ENCODE measurements at regions of chrX and their contacts with region 1.

Region 1: GRCh38 chrX:56248492-56248891 is 16.3 kb downstream of the KLF8 start:
- DNase-seq: peak; percentile 71
- H3K4me3 Mint-ChIP-seq: no peak overlapping the region
- H3K27ac Mint-ChIP-seq: no peak overlapping the region
- H3K4me1 Mint-ChIP-seq: peaks cover 6% of the 10 kb centered on the region
- H3K27me3 Mint-ChIP-seq: peaks cover 36% of the 10 kb centered on the region
- CTCF ChIP-seq: peak; percentile 67

Region 2: GRCh38 chrX:54891573-54891972 is 1356.9 kb before region 1 on chrX:
- CTCF ChIA-PET with region 1: no interaction called
- POLR2A ChIA-PET with region 1: no interaction called
- intact Hi-C with region 1: loop called (anchors 5 kb)
- DNase-seq: peak; percentile 56
- H3K4me3 Mint-ChIP-seq: no peak overlapping the region
- H3K27ac Mint-ChIP-seq: no peak overlapping the region
- H3K4me1 Mint-ChIP-seq: no peaks in the 10 kb centered on the region
- H3K27me3 Mint-ChIP-seq: peaks cover 51% of the 10 kb centered on the region
- CTCF ChIP-seq: no peak

Region 3: DNA sequence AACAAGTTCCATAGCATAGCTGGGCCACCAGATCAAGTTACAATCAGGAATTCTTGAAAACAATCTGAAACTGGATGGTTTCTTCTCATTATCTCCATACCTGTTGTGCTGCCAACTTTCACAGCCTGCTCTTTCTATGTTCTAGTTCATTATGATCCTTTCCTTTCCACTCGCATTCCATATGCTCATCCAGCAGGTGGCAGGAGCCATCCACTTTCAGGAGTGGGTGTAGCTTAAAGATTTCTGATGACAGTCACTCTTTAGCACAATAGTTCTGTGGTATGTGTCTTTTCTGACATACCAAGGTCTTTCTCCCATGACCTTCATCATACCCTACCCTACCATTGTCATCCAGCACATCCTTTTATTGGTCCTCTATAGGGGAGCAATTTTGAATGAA is 1113.3 kb before region 1 on chrX:
- CTCF ChIA-PET with region 1: interaction called, 7 read pairs
- POLR2A ChIA-PET with region 1: no interaction called
- intact Hi-C with region 1: loop called (anchors 1 kb)
- DNase-seq: peak; percentile 47
- H3K4me3 Mint-ChIP-seq: no peak overlapping the region
- H3K27ac Mint-ChIP-seq: no peak overlapping the region
- H3K4me1 Mint-ChIP-seq: no peaks in the 10 kb centered on the region
- H3K27me3 Mint-ChIP-seq: peaks cover 53% of the 10 kb centered on the region
- CTCF ChIP-seq: peak; percentile 45

Region 4: GRCh38 chrX:56219700-56220099 is 28.8 kb before region 1 on chrX:
- CTCF ChIA-PET with region 1: interaction called, 92 read pairs
- POLR2A ChIA-PET with region 1: no interaction called
- intact Hi-C with region 1: loop called (anchors 1 kb)
- DNase-seq: peak; percentile 36
- H3K4me3 Mint-ChIP-seq: no peak overlapping the region
- H3K27ac Mint-ChIP-seq: no peak overlapping the region
- H3K4me1 Mint-ChIP-seq: no peaks in the 10 kb centered on the region
- H3K27me3 Mint-ChIP-seq: peaks cover 22% of the 10 kb centered on the region
- CTCF ChIP-seq: peak; percentile 24

Region 5: DNA sequence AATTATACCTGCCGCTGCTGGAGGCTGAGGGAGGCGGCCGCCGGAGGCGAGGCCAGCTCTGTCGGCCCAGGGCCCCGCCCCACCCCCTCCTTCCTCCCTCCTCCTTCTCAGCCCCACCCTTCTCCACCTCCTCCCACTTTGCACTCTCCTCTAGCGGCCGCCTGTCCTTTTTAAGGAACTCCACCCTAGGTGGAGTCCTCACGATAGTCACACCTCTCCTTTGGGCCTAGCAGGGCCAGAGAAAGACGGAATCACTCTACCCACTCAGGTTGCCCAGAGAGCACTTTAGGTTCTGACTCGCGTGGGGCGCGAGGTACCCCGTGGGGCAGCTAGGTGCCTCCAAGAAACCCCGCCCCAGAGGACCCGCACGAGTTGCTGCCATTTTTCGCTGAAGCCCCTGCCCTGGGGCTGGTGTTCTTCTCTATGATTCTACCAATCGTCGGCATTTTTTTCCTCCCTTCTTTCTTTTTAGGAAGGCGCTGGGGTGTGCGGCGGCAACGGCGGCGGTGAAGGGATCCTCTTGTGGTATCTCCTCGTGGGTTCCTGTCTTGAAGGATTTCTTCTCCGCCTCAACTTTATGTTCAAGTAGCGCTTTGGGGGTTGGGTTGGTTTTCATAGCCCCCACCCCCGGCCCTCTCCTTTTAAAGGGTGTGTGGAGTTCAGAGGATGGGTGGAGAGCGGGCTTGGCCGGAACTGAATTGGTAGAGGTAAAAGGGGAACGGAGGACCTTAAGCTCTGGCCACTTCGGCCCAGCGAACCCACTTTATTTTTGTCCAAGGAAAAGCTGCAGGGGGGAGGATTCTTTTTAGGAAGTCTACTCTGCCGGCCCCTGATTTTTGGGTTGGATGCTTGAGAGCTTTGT is 16.0 kb before region 1 on chrX and contains the start of gene KLF8:
- CTCF ChIA-PET with region 1: interaction called, 26 read pairs
- POLR2A ChIA-PET with region 1: interaction called, 7 read pairs
- intact Hi-C with region 1: loop called (anchors 2 kb)
- DNase-seq: peak; percentile 83
- H3K4me3 Mint-ChIP-seq: peak within 1 kb of the TSS; percentile 83
- H3K27ac Mint-ChIP-seq: peak within 1 kb of the TSS; percentile 84
- H3K4me1 Mint-ChIP-seq: peaks cover 13% of the 10 kb centered on the region
- H3K27me3 Mint-ChIP-seq: peaks cover 42% of the 10 kb centered on the region
- CTCF ChIP-seq: no peak
- total RNA-seq, gene KLF8: 12.6 and 14.0 TPM in 2 replicates

Measured in MCF 10A (cell line).